K562 (cell line): ENCODE measurements at regions of chr10 and their contacts with region 1.

Region 1: DNA sequence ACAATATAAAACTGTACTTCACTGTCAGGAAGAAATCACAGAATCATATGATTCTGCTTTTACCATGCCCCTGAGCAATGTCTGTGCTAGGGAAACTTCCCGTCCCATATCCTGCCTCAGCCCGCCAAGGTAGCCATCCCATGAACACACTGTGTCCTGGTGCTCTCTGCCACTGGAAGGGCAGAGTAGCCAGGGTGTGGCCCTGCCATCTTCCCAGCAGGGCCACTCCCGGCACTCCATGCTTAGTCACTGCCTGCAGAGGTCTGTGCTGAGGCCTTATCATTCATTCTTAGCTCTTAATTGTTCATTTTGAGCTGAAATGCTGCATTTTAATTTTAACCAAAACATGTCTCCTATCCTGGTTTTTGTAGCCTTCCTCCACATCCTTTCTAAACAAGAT is 31.8 kb downstream of the AP3M1 start:
- DNase-seq: no peak
- ATAC-seq: peak; percentile 58
- H3K4me3 ChIP-seq: no peak overlapping the region
- H3K27ac ChIP-seq: no peak overlapping the region
- H3K4me1 ChIP-seq: peaks cover 0 to 2% of the 10 kb centered on the region in 2 experiments; a peak in 2 of 5 replicates
- H3K27me3 ChIP-seq: no peaks in the 10 kb centered on the region
- CTCF ChIP-seq: no peak
- EP300 ChIP-seq: no peak
- POLR2A ChIP-seq: peak; percentile 50; the same call in 1 of the 2 replicates
- RAD21 ChIP-seq: no peak

Region 2: GRCh38 chr10:74103560-74104248 is 15.1 kb before region 1 on chr10:
- CTCF ChIA-PET with region 1: no interaction called
- POLR2A ChIA-PET with region 1: interaction called, 18 read pairs
- in situ Hi-C with region 1: no loop called
- intact Hi-C with region 1: no loop called
- DNase-seq: peak in 2 of 4 experiments; percentile 31 to 45
- ATAC-seq: peak; percentile 76
- H3K4me3 ChIP-seq: no peak overlapping the region
- H3K27ac ChIP-seq: no peak overlapping the region
- H3K4me1 ChIP-seq: no peaks in the 10 kb centered on the region
- H3K27me3 ChIP-seq: no peaks in the 10 kb centered on the region
- CTCF ChIP-seq: peak; percentile 41 to 60 (median 48); a peak in 5 of 6 replicates
- EP300 ChIP-seq: no peak
- POLR2A ChIP-seq: no peak
- RAD21 ChIP-seq: peak; percentile 31 to 68; a peak in 3 of 4 replicates

Region 3: DNA sequence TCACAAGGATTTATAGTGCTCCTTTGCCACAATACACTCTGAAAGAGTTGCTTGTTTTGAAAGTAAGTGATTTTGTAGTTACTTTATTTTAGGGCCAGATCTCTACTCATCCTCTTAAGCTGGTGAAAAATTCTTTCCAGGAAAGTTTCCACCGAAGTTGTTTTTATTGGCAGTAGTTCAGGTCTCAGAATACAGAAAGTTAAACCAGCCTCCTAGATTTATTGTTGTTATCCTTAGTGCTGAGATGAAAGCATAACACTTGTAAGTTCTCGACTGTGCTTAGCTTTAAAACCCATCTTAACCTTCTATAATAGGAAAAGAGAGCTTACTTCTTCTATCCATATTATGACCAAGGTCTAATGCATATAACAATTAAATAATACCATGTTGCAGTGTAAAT is 26.3 kb after region 1 on chr10:
- CTCF ChIA-PET with region 1: no interaction called
- POLR2A ChIA-PET with region 1: interaction called, 10 read pairs
- in situ Hi-C with region 1: no loop called
- intact Hi-C with region 1: no loop called
- DNase-seq: no peak
- ATAC-seq: no peak
- H3K4me3 ChIP-seq: no peak overlapping the region
- H3K27ac ChIP-seq: no peak overlapping the region
- H3K4me1 ChIP-seq: peaks cover under 1 to 4% of the 10 kb centered on the region in 2 experiments; a peak in 2 of 5 replicates
- H3K27me3 ChIP-seq: no peaks in the 10 kb centered on the region
- CTCF ChIP-seq: no peak
- EP300 ChIP-seq: no peak
- POLR2A ChIP-seq: no peak
- RAD21 ChIP-seq: no peak